ENCODE measurements at regions of chr7 and their contacts with region 1.

Region 1: GRCh38 chr7:149071641-149072437 is 18.7 kb downstream of the ZNF786 start:
- DNase-seq: peak; percentile 38 to 64 (median 49)
- H3K4me3 ChIP-seq: no peak overlapping the region
- H3K4me3 Mint-ChIP-seq: peak overlapping the region in 5 of 7 donors; percentile 13 to 61 (median 45)
- H3K27ac ChIP-seq: no peak overlapping the region
- H3K27ac Mint-ChIP-seq: peak overlapping the region in 7 of 8 donors; percentile 35 to 91 (median 81)
- H3K4me1 ChIP-seq: peaks cover 5% of the 10 kb centered on the region
- H3K4me1 Mint-ChIP-seq: peaks cover 5 to 12% (median 7%) of the 10 kb centered on the region in 3 donors
- H3K27me3 ChIP-seq: no peaks in the 10 kb centered on the region
- H3K27me3 Mint-ChIP-seq: no peaks in the 10 kb centered on the region

Region 2: GRCh38 chr7:149005241-149006050 is 66.4 kb before region 1 on chr7:
- CTCF ChIA-PET with region 1: interaction called, 120 read pairs
- POLR2A ChIA-PET with region 1: no interaction called
- DNase-seq: peak; percentile 64 to 88 (median 78)
- H3K4me3 ChIP-seq: no peak overlapping the region
- H3K4me3 Mint-ChIP-seq: no peak overlapping the region
- H3K27ac ChIP-seq: no peak overlapping the region
- H3K27ac Mint-ChIP-seq: peak overlapping the region in 7 of 8 donors; percentile 25 to 93 (median 85)
- H3K4me1 ChIP-seq: peaks cover 6% of the 10 kb centered on the region
- H3K4me1 Mint-ChIP-seq: peaks cover 0 to 5% (median 3%) of the 10 kb centered on the region in 3 donors
- H3K27me3 ChIP-seq: no peaks in the 10 kb centered on the region
- H3K27me3 Mint-ChIP-seq: no peaks in the 10 kb centered on the region

Region 3: GRCh38 chr7:149021725-149022062 is 50.1 kb before region 1 on chr7:
- CTCF ChIA-PET with region 1: interaction called, 11 read pairs
- POLR2A ChIA-PET with region 1: no interaction called
- DNase-seq: no peak
- H3K4me3 ChIP-seq: no peak overlapping the region
- H3K4me3 Mint-ChIP-seq: peak overlapping the region in 4 of 7 donors; percentile 35 to 65 (median 42)
- H3K27ac ChIP-seq: no peak overlapping the region
- H3K27ac Mint-ChIP-seq: peak overlapping the region in 6 of 8 donors; percentile 39 to 79 (median 64)
- H3K4me1 ChIP-seq: peaks cover 15% of the 10 kb centered on the region
- H3K4me1 Mint-ChIP-seq: peaks cover 38 to 50% (median 49%) of the 10 kb centered on the region in 3 donors
- H3K27me3 ChIP-seq: no peaks in the 10 kb centered on the region
- H3K27me3 Mint-ChIP-seq: peaks cover 0 to 3% of the 10 kb centered on the region in 2 donors

Region 4: DNA sequence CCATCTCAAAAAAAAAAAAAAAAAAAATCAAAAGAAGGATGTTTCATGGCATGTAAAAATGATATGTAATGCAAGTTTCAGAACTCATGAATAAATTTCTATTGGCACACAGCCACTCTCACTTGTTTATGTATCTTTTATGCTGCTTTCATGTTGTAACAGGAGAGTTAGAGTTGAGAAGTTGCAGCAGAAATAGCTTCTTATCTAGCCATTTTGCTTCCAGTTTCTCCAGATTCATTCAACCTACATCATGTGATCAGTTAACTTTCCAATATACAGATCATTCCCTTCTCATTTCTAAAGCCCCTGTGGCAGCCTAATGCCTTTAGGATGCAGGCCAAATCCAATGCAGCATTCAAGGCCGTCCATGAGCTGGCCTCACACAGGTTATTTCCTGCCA is 11.7 kb before region 1 on chr7:
- CTCF ChIA-PET with region 1: interaction called, 12 read pairs
- POLR2A ChIA-PET with region 1: no interaction called
- DNase-seq: no peak
- H3K4me3 ChIP-seq: no peak overlapping the region
- H3K4me3 Mint-ChIP-seq: no peak overlapping the region
- H3K27ac ChIP-seq: no peak overlapping the region
- H3K27ac Mint-ChIP-seq: peak overlapping the region in 1 of 8 donors; percentile 46
- H3K4me1 ChIP-seq: no peaks in the 10 kb centered on the region
- H3K4me1 Mint-ChIP-seq: peaks cover 1 to 12% (median 5%) of the 10 kb centered on the region in 3 donors
- H3K27me3 ChIP-seq: no peaks in the 10 kb centered on the region
- H3K27me3 Mint-ChIP-seq: no peaks in the 10 kb centered on the region

Region 5: GRCh38 chr7:149090397-149091195 is 18.8 kb after region 1 on chr7 and contains the start of gene ZNF786:
- CTCF ChIA-PET with region 1: interaction called, 17 read pairs
- POLR2A ChIA-PET with region 1: interaction called, 3 read pairs
- DNase-seq: peak; percentile 88 to 93 (median 91)
- H3K4me3 ChIP-seq: peak within 1 kb of the TSS; percentile 53
- H3K4me3 Mint-ChIP-seq: peak within 1 kb of the TSS; percentile 88 to 99 (median 94)
- H3K27ac ChIP-seq: peak within 1 kb of the TSS; percentile 87
- H3K27ac Mint-ChIP-seq: peak within 1 kb of the TSS; percentile 88 to 100 (median 100)
- H3K4me1 ChIP-seq: peaks cover 4% of the 10 kb centered on the region
- H3K4me1 Mint-ChIP-seq: peaks cover 27 to 38% (median 31%) of the 10 kb centered on the region in 3 donors
- H3K27me3 ChIP-seq: no peaks in the 10 kb centered on the region
- H3K27me3 Mint-ChIP-seq: no peaks in the 10 kb centered on the region
- total RNA-seq, gene ZNF786: 8.5 to 9.2 TPM

Region 6: GRCh38 chr7:149175150-149175549 is 103.3 kb after region 1 on chr7:
- CTCF ChIA-PET with region 1: no interaction called
- POLR2A ChIA-PET with region 1: no interaction called
- DNase-seq: no peak
- H3K4me3 ChIP-seq: no peak overlapping the region
- H3K4me3 Mint-ChIP-seq: no peak overlapping the region
- H3K27ac ChIP-seq: no peak overlapping the region
- H3K27ac Mint-ChIP-seq: no peak overlapping the region
- H3K4me1 ChIP-seq: no peaks in the 10 kb centered on the region
- H3K4me1 Mint-ChIP-seq: no peaks in the 10 kb centered on the region
- H3K27me3 ChIP-seq: no peaks in the 10 kb centered on the region
- H3K27me3 Mint-ChIP-seq: no peaks in the 10 kb centered on the region